ENCODE measurements at regions of chr1 and their contacts with region 1.

Region 1: DNA sequence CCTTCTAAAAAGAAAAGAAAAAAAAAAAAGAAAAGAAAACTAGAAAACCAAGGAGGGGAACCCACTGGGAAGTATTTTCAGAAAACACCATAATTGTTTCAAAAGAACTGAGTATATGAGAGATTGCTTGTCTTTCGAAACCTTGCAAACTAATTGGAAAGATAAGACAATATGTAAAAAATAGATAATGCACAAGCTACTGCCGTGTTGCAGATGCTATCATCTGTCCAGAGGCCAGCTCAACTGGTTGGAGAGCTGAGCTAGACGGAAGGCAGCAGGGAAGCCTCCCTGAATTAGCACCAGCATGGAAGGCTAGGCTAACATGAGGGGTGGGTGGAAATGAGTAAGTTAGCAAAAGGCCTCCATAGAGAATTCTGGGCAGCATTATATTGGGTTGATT is 16.2 kb upstream of the CACHD1 start:
- DNase-seq: no peak
- H3K4me3 ChIP-seq: no peak overlapping the region
- H3K27ac ChIP-seq: no peak overlapping the region
- H3K4me1 ChIP-seq: no peaks in the 10 kb centered on the region
- H3K27me3 ChIP-seq: no peaks in the 10 kb centered on the region
- CTCF ChIP-seq: no peak

Region 2: GRCh38 chr1:64553281-64553680 is 99.6 kb after region 1 on chr1:
- CTCF ChIA-PET with region 1: interaction called, 13 read pairs
- dilution Hi-C with region 1: no loop called
- in situ Hi-C with region 1: no loop called
- intact Hi-C with region 1: no loop called
- DNase-seq: no peak
- H3K4me3 ChIP-seq: no peak overlapping the region
- H3K27ac ChIP-seq: no peak overlapping the region
- H3K4me1 ChIP-seq: no peaks in the 10 kb centered on the region
- H3K27me3 ChIP-seq: no peaks in the 10 kb centered on the region
- CTCF ChIP-seq: peak in 1 of 2 donors; percentile 23

Measured in mammary epithelial cell (primary cell).